Endothelial cell of umbilical vein (primary cell): ENCODE measurements at regions of chr9 and their contacts with region 1.

Region 1: DNA sequence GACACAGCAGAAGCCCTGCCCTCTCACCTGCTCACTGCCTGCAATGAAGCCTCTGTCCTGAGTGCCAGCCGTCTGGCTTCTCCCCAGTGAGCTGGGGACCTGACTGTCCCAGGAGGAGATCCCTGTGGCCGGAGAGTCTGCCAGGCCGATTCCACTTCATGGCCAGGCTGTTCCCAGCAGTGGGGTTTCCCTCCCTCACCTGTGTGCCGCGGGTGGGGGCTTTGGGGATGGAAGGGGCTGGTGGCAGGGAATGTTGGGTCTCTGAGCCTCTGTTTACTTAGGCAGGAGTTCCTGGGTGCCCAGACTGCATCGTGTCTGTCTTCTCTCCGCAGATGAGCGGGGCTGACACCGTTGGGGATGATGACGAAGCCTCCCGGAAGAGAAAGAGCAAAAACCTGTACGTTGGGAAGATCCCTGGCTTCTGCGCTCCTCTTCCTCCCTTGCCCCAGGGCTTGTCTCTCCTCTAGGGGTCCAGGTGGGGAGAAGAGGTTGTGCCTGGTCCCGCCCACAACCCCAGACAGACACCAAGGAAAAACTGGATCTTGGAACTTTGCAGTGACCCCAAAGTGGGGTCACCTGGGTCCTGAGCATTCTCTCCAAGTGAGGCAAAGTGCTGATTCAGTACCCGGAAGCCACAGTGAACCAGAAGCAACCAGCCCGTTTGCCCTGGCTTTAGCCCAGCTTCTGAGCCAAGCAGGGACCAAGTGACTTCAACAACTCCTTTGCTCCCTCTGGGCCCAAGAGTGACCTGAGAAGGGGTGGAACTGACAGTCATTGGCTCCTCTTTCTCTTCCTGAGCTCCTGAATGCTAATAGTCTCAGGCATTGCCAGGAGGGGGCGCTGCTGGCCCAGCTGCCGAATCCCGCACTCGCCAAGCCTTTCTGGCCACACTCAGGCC is 127.7 kb downstream of the RGS3 start:
- DNase-seq: peak; percentile 79
- H3K4me3 ChIP-seq: no peak overlapping the region
- H3K27ac ChIP-seq: peak overlapping the region; percentile 51
- H3K4me1 ChIP-seq: peaks cover 68% of the 10 kb centered on the region
- H3K27me3 ChIP-seq: no peaks in the 10 kb centered on the region
- CTCF ChIP-seq: peak; percentile 90 to 91
- POLR2A ChIP-seq: no peak

Region 2: GRCh38 chr9:113401027-113401792 is 190.0 kb before region 1 on chr9 and contains the start of gene ALAD:
- CTCF ChIA-PET with region 1: interaction called, 13 read pairs
- POLR2A ChIA-PET with region 1: no interaction called
- dilution Hi-C with region 1: no loop called
- intact Hi-C with region 1: loop called (anchors 1 kb)
- DNase-seq: peak; percentile 99
- H3K4me3 ChIP-seq: peak within 1 kb of the TSS; percentile 48 to 84 (median 51)
- H3K27ac ChIP-seq: no peak within 1 kb of the TSS
- H3K4me1 ChIP-seq: peaks cover 24% of the 10 kb centered on the region
- H3K27me3 ChIP-seq: no peaks in the 10 kb centered on the region
- CTCF ChIP-seq: peak; percentile 99
- POLR2A ChIP-seq: peak; percentile 68
- total RNA-seq, gene ALAD: 29.5 TPM in 2 replicates

Region 3: GRCh38 chr9:113523421-113524236 is 67.6 kb before region 1 on chr9:
- CTCF ChIA-PET with region 1: interaction called, 16 read pairs
- POLR2A ChIA-PET with region 1: interaction called, 5 read pairs
- dilution Hi-C with region 1: no loop called
- intact Hi-C with region 1: loop called (anchors 1 kb)
- DNase-seq: peak; percentile 85
- H3K4me3 ChIP-seq: no peak overlapping the region
- H3K27ac ChIP-seq: peak overlapping the region; percentile 80
- H3K4me1 ChIP-seq: peaks cover 65% of the 10 kb centered on the region
- H3K27me3 ChIP-seq: no peaks in the 10 kb centered on the region
- CTCF ChIP-seq: no peak
- POLR2A ChIP-seq: peak; percentile 21

Region 4: DNA sequence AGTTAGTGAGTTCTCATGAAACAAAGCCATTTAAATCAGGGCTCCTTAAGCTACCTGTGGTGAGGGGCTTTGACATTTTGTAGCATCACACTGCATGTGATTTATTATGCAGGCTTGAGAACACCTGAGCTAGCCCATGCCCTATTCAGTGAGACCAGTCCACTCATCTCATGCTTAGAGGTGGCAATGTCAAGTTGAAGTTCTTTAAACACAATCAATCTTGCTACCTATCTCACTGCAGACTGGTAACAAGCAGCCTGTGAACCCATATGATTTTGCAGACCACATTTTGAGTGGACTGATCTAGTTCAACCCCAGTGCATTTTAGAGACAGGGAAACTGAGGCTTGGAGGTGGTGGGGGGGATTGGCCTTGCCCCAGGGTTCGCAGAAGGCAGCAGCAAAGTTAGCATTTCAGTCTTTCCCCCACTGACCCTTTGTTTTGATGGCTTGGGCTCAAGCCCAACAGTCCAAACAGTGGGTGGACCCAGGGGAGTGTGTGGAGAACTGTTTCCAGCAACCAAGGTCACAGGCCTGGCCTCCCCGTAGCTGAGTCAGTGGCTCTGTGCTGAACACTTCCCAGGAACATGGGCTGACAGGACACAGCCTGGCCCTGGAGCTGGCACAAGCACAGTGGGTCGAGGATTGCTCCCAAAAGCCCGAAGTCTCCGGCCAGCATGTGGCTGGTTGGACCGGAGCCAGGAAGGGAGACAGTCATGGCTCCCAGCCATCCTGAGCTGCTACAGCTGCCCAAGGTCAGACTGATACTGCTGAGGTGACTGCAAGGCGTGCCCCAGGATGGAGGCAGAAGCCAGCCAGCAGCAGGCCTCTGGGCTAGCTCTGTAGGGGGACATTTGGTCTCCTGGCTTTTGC is 32.4 kb before region 1 on chr9:
- CTCF ChIA-PET with region 1: interaction called, 10 read pairs
- POLR2A ChIA-PET with region 1: no interaction called
- dilution Hi-C with region 1: no loop called
- intact Hi-C with region 1: no loop called
- DNase-seq: peak; percentile 79
- H3K4me3 ChIP-seq: no peak overlapping the region
- H3K27ac ChIP-seq: no peak overlapping the region
- H3K4me1 ChIP-seq: peaks cover 11% of the 10 kb centered on the region
- H3K27me3 ChIP-seq: no peaks in the 10 kb centered on the region
- CTCF ChIP-seq: no peak
- POLR2A ChIP-seq: no peak

Region 5: DNA sequence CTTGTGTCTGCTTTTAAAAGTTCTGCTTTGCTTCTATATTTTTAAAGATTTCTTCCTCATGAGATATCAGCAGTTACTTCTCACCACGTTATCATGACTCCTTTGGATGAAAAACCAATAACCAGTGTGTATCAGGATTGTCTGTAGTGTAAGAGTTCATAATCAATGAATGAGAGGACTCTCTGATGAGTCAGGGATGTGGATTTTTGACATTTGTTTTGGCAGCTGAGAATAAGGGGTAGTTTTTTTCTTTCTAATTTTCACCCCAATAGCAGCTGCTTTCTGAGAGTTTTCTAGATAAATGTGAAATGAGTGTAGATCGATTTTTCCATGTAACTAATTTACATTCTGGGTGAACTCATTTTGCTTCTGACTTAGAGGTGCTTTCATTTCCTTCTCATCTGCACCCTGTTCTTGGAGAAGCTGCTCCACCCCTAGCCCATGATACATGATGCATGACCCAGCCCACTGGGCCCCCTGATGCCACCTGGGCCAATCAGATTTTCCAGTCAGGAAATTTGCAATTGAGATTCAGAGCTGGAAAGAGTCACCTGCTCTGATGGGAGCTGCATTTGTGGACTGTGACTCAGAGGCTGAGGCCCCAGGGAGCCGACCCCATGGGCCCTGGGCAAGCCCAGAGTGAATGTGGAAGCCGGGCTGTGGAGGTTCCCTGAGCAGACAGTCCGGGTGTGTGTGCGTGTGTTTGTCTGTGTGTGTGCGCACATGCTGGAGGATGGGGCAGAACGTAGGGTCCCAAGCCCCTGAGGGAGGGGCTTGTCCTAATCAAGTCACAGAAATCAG is 31.6 kb after region 1 on chr9:
- CTCF ChIA-PET with region 1: interaction called, 34 read pairs
- POLR2A ChIA-PET with region 1: interaction called, 23 read pairs
- dilution Hi-C with region 1: no loop called
- intact Hi-C with region 1: loop called (anchors 1 kb)
- DNase-seq: peak; percentile 82
- H3K4me3 ChIP-seq: no peak overlapping the region
- H3K27ac ChIP-seq: peak overlapping the region; percentile 100
- H3K4me1 ChIP-seq: peaks cover 53% of the 10 kb centered on the region
- H3K27me3 ChIP-seq: no peaks in the 10 kb centered on the region
- CTCF ChIP-seq: no peak
- POLR2A ChIP-seq: no peak

Region 6: GRCh38 chr9:113664181-113664875 is 73.1 kb after region 1 on chr9:
- CTCF ChIA-PET with region 1: interaction called, 1,173 read pairs
- POLR2A ChIA-PET with region 1: interaction called, 71 read pairs
- dilution Hi-C with region 1: loop called (anchors 10 kb)
- intact Hi-C with region 1: no loop called
- DNase-seq: no peak
- H3K4me3 ChIP-seq: no peak overlapping the region
- H3K27ac ChIP-seq: no peak overlapping the region
- H3K4me1 ChIP-seq: no peaks in the 10 kb centered on the region
- H3K27me3 ChIP-seq: peaks cover 0 to 8% of the 10 kb centered on the region in 2 experiments
- CTCF ChIP-seq: no peak
- POLR2A ChIP-seq: no peak

Region 7: DNA sequence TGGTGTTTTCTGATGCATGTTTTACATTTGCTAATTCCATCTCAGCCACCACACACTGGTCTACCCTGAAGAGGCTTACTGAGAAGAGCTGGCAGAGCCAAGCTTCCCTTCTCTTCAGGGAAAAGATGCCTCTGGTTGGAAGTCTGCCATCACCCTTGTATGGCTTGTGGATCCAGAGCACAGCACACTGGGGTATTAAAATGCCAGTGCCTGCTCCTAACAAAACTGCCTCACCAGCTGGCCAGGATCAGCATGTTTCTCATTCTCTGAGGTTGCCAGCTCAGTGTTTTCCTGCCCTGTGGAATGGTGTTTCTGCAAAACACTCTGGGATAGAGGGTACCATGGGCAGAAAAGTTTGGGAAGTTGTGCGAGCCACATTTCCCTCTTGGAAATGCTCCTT is 253.2 kb after region 1 on chr9:
- CTCF ChIA-PET with region 1: no interaction called
- POLR2A ChIA-PET with region 1: no interaction called
- dilution Hi-C with region 1: no loop called
- intact Hi-C with region 1: no loop called
- DNase-seq: no peak
- H3K4me3 ChIP-seq: no peak overlapping the region
- H3K27ac ChIP-seq: no peak overlapping the region
- H3K4me1 ChIP-seq: no peaks in the 10 kb centered on the region
- H3K27me3 ChIP-seq: peaks cover 10 to 11% of the 10 kb centered on the region in 2 experiments
- CTCF ChIP-seq: no peak
- POLR2A ChIP-seq: no peak